ENCODE measurements at regions of chr11 and their contacts with region 1.

Region 1: DNA sequence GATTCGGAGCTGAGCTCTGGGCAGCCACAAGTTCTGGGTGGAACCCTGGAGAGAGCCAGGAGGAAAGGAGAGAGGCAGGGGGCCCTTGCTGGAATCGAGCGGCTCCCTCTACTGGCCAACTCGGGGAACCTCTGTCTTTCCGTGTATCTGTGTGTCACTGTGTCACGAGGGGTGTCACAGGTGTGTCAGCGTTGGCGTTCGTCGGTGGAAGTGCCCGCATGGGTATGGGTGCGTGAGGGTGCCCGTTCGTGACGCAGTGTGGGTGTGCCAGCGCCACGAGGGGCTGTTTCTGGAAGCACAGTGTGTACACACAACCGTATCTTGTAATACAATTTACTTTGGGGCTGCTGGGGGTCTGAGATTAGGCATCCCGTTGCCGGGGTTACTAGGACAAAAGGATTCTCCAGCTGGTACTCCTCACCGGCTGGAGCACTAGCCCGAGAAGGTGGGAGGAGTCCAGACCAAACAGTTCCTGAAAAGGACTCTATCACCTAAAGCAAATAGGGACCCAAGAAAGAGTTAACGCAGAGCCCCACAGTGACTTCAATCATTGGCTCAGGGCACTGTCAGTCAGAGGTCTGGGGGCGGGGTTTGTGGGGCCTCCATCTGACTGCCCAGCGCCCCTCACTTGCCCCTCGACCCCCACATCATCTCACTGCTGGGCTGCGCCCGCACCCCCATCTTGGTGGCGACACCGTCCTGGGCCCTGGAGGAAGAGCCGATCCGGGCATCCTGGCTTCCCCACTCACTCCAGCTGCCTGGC is 2.6 kb upstream of the BCL9L start:
- DNase-seq: no peak
- H3K4me3 ChIP-seq: peak overlapping the region; percentile 72
- H3K27me3 ChIP-seq: no peaks in the 10 kb centered on the region
- CTCF ChIP-seq: peak; percentile 92

Region 2: GRCh38 chr11:118791111-118791965 is 137.0 kb before region 1 on chr11 and contains the start of gene DDX6:
- CTCF ChIA-PET with region 1: interaction called, 42 read pairs
- POLR2A ChIA-PET with region 1: no interaction called
- DNase-seq: peak; percentile 26
- H3K4me3 ChIP-seq: peak within 1 kb of the TSS; percentile 93
- H3K27me3 ChIP-seq: no peaks in the 10 kb centered on the region
- CTCF ChIP-seq: peak; percentile 50
- polyA plus RNA-seq, gene DDX6: 23.7 and 49.8 TPM in 2 replicates

Region 3: GRCh38 chr11:118870396-118871345 is 57.6 kb before region 1 on chr11:
- CTCF ChIA-PET with region 1: interaction called, 10 read pairs
- POLR2A ChIA-PET with region 1: no interaction called
- DNase-seq: no peak
- H3K4me3 ChIP-seq: no peak overlapping the region
- H3K27me3 ChIP-seq: no peaks in the 10 kb centered on the region
- CTCF ChIP-seq: peak; percentile 38

Region 4: GRCh38 chr11:118895142-118896039 is 32.9 kb before region 1 on chr11:
- CTCF ChIA-PET with region 1: interaction called, 17 read pairs
- POLR2A ChIA-PET with region 1: no interaction called
- DNase-seq: no peak
- H3K4me3 ChIP-seq: no peak overlapping the region
- H3K27me3 ChIP-seq: no peaks in the 10 kb centered on the region
- CTCF ChIP-seq: no peak

Region 5: DNA sequence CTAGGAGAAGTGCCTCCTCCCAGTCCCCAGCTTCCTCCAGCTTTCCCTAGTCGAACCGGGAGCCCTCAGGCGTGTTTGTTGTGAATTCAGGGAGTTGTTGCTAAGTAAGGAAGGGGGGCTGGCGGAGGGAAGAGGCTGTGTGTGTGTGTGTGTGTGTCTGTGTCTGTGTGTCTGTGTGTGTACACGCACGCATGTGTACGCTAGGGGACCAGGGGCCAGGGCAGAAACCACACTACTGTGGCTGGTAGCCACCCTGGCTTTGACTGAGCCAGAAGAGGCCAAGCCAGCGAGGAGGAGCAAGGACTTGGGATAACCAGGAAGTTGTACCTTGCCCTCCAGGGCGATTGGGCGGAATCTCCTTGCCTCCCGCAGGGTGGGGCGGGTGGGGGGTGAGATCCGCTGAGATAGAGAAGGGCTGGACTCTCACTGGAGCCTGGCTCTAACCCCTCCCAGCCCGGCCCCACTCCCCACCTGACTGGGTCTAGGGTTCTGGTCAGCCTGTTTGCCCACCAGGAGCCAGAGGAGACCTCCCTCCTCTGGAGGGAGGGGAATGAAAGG is 10.1 kb before region 1 on chr11:
- CTCF ChIA-PET with region 1: interaction called, 11 read pairs
- POLR2A ChIA-PET with region 1: interaction called, 3 read pairs
- DNase-seq: peak; percentile 87
- H3K4me3 ChIP-seq: peak overlapping the region; percentile 38
- H3K27me3 ChIP-seq: no peaks in the 10 kb centered on the region
- CTCF ChIP-seq: no peak

Region 6: GRCh38 chr11:118939953-118940598 is 11.8 kb after region 1 on chr11:
- CTCF ChIA-PET with region 1: interaction called, 19 read pairs
- POLR2A ChIA-PET with region 1: no interaction called
- DNase-seq: no peak
- H3K4me3 ChIP-seq: no peak overlapping the region
- H3K27me3 ChIP-seq: peaks cover 2% of the 10 kb centered on the region
- CTCF ChIP-seq: no peak

Region 7: DNA sequence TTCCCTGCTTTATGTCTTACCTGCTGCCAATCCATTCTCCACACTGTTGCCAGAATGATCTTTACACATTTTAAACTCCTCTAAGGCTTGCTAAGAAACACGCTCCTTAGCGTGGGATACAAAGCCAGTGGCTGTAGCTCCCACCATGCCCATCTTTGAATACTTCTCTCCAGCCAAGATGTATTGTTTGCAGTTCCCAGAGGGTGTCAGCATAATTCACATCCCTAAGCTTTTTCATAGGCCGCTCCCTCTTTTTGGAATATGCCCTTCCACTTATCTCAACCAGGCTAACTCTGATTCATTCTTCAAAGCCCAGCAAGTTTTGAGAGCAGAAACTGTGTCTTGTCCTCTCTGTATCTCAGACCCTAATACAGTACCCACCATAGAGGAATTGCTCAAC is 19.7 kb after region 1 on chr11:
- CTCF ChIA-PET with region 1: interaction called, 16 read pairs
- POLR2A ChIA-PET with region 1: no interaction called
- DNase-seq: no peak
- H3K4me3 ChIP-seq: no peak overlapping the region
- H3K27me3 ChIP-seq: peaks cover 20% of the 10 kb centered on the region
- CTCF ChIP-seq: no peak

Measured in BJ (cell line).